ENCODE measurements at regions of chr12 and their contacts with region 1.

Region 1: GRCh38 chr12:122895705-122896636 is at the start of gene VPS37B:
- DNase-seq: peak; percentile 93
- H3K4me3 Mint-ChIP-seq: peak within 1 kb of the TSS; percentile 79
- H3K27ac Mint-ChIP-seq: peak within 1 kb of the TSS; percentile 79
- H3K4me1 Mint-ChIP-seq: peaks cover 77% of the 10 kb centered on the region
- H3K27me3 Mint-ChIP-seq: peaks cover 3% of the 10 kb centered on the region
- total RNA-seq, gene VPS37B: 10.0 to 10.4 TPM

Region 2: GRCh38 chr12:122116707-122117535 is 779.0 kb before region 1 on chr12:
- CTCF ChIA-PET with region 1: no interaction called
- POLR2A ChIA-PET with region 1: no interaction called
- intact Hi-C with region 1: no loop called
- DNase-seq: no peak
- H3K4me3 Mint-ChIP-seq: no peak overlapping the region
- H3K27ac Mint-ChIP-seq: no peak overlapping the region
- H3K4me1 Mint-ChIP-seq: peaks cover 15% of the 10 kb centered on the region
- H3K27me3 Mint-ChIP-seq: no peaks in the 10 kb centered on the region

Region 3: DNA sequence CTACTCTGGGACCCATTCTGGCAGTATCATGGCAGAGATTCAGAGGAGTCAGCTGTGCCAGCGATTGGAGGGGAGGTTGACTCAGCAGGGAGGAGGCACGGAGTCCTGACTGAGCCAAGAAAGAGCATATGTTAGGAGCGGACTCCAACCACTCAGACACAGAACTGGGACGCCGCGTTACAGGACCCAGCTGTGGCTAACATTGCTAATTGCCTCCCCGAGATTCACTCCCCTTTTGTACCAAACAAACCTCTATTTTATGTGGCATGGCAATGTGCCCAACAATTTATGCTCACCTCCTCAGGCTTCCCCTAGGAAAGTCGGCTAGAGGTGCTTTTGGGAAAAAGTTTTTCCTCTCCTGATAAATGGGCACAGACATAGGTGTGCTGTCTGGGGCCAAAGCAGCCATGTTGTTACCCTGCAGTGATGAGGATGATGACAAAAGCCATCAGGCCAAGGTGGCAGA is 458.3 kb before region 1 on chr12:
- CTCF ChIA-PET with region 1: no interaction called
- POLR2A ChIA-PET with region 1: no interaction called
- intact Hi-C with region 1: no loop called
- DNase-seq: no peak
- H3K4me3 Mint-ChIP-seq: no peak overlapping the region
- H3K27ac Mint-ChIP-seq: no peak overlapping the region
- H3K4me1 Mint-ChIP-seq: no peaks in the 10 kb centered on the region
- H3K27me3 Mint-ChIP-seq: no peaks in the 10 kb centered on the region

Region 4: DNA sequence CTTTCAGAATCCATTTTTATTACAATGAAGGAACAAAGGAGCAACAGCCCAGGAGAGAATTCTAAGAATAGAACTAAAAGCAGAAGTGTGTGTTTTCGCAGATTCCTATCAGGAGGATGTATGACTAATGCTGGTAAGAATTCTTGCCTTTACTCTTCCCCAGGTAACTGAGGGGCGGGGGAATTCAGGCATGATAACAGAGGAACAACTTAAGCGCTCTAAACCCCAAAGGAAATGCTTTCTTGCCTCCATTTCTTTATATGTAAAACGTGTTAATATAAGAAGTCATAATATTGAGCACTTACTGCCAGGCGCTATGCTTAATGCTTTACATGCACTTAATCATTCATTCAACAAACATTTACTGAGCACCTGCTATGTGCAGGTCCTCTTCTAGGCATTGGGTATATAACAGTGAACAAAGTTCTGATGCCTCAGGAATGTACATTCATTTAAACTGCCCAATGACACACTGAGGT is 169.9 kb before region 1 on chr12:
- CTCF ChIA-PET with region 1: no interaction called
- POLR2A ChIA-PET with region 1: no interaction called
- intact Hi-C with region 1: loop called (anchors 5 kb)
- DNase-seq: peak; percentile 51
- H3K4me3 Mint-ChIP-seq: peak overlapping the region; percentile 19
- H3K27ac Mint-ChIP-seq: peak overlapping the region; percentile 74
- H3K4me1 Mint-ChIP-seq: peaks cover 49% of the 10 kb centered on the region
- H3K27me3 Mint-ChIP-seq: peaks cover 6% of the 10 kb centered on the region

Region 5: DNA sequence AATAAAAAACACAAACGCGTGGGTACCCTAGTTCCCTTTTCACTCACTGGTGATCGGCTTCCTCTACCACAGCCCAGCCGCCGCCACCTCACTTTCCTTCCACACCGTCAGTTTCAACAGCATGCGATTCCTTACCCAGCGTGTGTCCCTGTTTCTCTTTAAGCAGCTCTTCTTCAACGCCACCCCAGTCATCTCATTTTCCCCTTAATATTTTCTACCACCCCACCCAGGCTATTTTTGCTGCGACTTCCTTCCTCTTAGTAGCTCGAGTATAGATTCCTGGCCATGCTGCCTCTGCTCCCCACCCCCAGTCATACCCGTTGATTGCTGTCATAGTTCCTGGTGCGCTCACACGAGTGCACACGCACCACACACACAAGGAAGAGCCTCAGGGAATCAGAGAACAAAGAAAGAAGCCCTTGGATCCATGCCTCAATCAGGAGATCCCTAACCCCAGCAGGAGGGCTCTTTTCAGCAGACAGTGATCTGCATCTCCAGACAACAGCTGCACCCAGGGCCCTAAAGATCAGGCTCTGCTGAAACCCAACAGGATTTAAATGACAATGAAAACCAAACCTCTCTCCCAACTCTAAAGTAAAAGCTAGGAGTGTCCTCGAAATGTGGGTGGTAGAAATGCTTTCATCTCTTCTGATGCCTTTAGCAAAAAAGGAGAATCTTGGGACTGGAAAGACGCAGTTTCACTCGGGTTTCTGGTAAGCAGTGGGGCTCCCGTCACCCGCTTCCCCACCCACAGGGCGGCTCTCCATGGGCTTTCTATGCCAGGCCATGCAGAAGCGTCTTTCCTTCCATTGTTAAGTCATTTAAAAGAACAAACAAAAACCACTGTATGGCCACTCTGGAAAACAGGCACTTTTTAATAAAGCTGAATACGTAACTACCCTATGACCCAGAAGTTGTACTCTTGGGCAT is 23.9 kb before region 1 on chr12:
- CTCF ChIA-PET with region 1: interaction called, 7 read pairs
- POLR2A ChIA-PET with region 1: interaction called, 3 read pairs
- intact Hi-C with region 1: loop called (anchors 1 kb)
- DNase-seq: peak; percentile 85
- H3K4me3 Mint-ChIP-seq: peak overlapping the region; percentile 24
- H3K27ac Mint-ChIP-seq: peak overlapping the region; percentile 1
- H3K4me1 Mint-ChIP-seq: peaks cover 60% of the 10 kb centered on the region
- H3K27me3 Mint-ChIP-seq: peaks cover 17% of the 10 kb centered on the region

Region 6: GRCh38 chr12:122921917-122922316 is 25.9 kb after region 1 on chr12:
- CTCF ChIA-PET with region 1: no interaction called
- POLR2A ChIA-PET with region 1: no interaction called
- intact Hi-C with region 1: no loop called
- DNase-seq: no peak
- H3K4me3 Mint-ChIP-seq: no peak overlapping the region
- H3K27ac Mint-ChIP-seq: no peak overlapping the region
- H3K4me1 Mint-ChIP-seq: no peaks in the 10 kb centered on the region
- H3K27me3 Mint-ChIP-seq: no peaks in the 10 kb centered on the region

Region 7: DNA sequence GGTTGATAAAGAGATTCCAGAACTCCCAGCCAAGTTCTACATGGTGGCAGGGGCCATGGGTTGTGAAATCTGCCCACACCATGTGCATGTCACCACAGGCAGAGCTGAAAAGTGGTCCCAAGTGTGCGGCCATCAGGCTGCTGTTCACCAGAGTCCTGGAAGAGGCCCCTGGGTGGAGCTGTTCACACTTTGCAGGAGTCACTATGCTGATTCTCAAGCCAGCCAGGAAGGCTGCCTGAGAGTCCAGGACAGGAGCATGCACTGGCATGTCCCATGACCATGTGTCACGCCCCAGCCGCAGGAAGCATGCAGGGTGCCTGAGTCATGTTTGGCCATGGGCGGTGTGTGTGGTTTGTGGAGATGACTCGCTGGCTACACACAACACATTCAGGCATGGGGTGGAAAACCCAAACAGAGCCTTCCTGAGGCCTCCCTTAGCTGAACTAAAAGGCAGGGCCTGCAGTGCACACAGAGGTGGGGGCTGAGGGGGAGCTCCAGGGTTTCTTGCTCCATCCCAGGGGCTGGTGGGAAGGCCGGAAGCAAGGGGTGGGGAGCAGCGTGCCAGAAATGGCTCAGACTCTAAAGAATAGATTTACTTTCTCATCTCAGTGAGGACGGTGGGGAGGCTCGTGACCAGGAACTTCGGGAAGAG is 50.8 kb after region 1 on chr12:
- CTCF ChIA-PET with region 1: interaction called, 3 read pairs
- POLR2A ChIA-PET with region 1: no interaction called
- intact Hi-C with region 1: loop called (anchors 2 kb)
- DNase-seq: peak; percentile 95
- H3K4me3 Mint-ChIP-seq: no peak overlapping the region
- H3K27ac Mint-ChIP-seq: peak overlapping the region; percentile 35
- H3K4me1 Mint-ChIP-seq: peaks cover 20% of the 10 kb centered on the region
- H3K27me3 Mint-ChIP-seq: no peaks in the 10 kb centered on the region

Region 8: DNA sequence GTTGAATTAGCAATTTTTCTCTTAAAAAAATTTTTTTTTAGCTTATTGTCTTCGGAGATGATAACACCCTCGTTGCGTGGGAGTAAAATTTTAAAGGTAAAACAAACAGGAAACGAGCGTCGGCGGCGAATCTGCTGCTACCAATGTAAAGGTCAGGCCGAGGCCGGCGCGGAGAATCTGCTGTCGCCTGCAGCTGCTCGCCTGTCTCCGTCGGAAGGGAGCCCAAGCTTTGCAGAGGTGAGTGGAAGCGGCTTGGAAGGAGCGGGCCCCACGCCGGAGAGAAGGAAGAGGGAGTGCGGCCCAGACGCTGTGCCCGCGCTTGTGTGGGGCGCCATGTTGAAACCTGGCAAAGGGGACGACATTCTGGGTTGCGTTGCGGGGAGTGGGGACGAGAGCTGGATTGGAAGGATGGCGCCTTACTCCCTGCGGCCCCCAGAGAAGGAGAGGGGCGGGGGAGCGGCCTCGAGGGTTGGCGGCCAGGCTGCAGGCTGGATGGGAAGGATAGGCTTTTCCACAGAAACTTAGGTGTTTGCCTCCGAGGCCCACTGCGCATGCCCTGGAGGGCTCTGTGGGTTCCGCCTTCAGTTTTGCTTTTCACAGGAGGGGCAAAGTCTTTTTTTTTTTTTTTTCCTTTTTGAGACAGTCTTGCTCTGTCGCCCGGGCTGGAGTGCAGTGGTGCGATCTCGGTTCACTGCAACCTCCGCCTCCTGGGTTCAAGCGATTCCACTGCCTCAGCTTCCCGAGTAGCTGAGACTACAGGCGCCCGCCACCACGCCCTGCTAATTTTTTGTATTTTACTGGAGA is 562.2 kb after region 1 on chr12 and contains the start of gene SNRNP35:
- CTCF ChIA-PET with region 1: no interaction called
- POLR2A ChIA-PET with region 1: no interaction called
- intact Hi-C with region 1: loop called (anchors 10 kb)
- DNase-seq: peak; percentile 88
- H3K4me3 Mint-ChIP-seq: peak within 1 kb of the TSS; percentile 97
- H3K27ac Mint-ChIP-seq: peak within 1 kb of the TSS; percentile 99
- H3K4me1 Mint-ChIP-seq: peaks cover 23% of the 10 kb centered on the region
- H3K27me3 Mint-ChIP-seq: no peaks in the 10 kb centered on the region
- total RNA-seq, gene SNRNP35: 28.6 to 30.6 TPM